Right ventricle myocardium superior (tissue), 1 donor: ENCODE measurements at regions of chr2 and their contacts with region 1.

Region 1: GRCh38 chr2:68383778-68384177 is 18.7 kb downstream of the PLEK start:
- DNase-seq: no peak
- ATAC-seq: no peak

Region 2: GRCh38 chr2:68426848-68427579 is 43.2 kb after region 1 on chr2:
- intact Hi-C with region 1: loop called (anchors 5 kb)
- DNase-seq: no peak
- ATAC-seq: no peak

Region 3: DNA sequence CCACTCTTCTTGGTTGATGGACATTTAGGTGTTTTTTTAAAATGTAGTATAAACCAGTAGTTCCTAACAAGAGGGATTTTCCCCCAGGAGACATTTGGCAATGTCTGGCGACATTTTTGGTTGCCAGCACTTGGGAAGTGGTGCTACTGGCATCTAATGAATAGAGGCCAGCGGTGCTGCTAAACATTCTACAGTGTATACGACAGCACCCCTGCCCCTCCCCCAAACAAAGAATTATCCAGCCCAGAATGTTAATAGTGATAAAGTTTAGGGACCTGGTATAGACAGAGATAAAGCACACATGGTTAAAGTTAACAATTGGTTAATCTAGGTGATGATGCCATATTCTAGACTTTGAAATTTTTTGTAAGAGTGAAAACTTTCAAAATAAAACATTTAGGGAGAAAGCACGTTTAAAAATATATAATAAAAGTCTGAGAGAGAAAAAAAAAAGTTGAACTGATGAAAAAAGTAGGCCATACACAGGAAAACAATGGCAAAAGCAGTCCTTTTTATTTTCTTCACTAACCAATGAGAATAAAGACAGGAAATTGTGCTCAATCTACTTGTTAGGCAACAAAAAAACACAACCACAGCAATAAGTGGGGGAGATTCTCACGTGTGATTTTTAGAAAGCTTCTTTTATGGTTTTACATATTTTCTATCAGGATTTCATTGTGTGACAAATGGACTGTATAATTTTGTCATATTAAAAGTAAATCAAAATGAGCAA is 68.6 kb after region 1 on chr2:
- intact Hi-C with region 1: no loop called
- DNase-seq: no peak
- ATAC-seq: peak; percentile 8